Activated CD4-positive, alpha-beta T cell treated with anti-CD3 and anti-CD28 coated beads, Interleukin-2, amount 10 ng/mL, durations not matched to agents 24 days and 14 days (primary cell): ENCODE measurements at regions of chr3 and their contacts with region 1.

Region 1: GRCh38 chr3:150870396-150870795 is 34.8 kb downstream of the MINDY4B start:
- DNase-seq: no peak
- H3K4me3 Mint-ChIP-seq: no peak overlapping the region
- H3K27ac Mint-ChIP-seq: no peak overlapping the region
- H3K4me1 Mint-ChIP-seq: peaks cover under 1% of the 10 kb centered on the region
- H3K27me3 Mint-ChIP-seq: peaks cover 12% of the 10 kb centered on the region

Region 2: GRCh38 chr3:149688112-149688757 is 1182.2 kb before region 1 on chr3:
- intact Hi-C with region 1: no loop called
- DNase-seq: no peak
- H3K4me3 Mint-ChIP-seq: no peak overlapping the region
- H3K27ac Mint-ChIP-seq: no peak overlapping the region
- H3K4me1 Mint-ChIP-seq: no peaks in the 10 kb centered on the region
- H3K27me3 Mint-ChIP-seq: peaks cover 10% of the 10 kb centered on the region

Region 3: DNA sequence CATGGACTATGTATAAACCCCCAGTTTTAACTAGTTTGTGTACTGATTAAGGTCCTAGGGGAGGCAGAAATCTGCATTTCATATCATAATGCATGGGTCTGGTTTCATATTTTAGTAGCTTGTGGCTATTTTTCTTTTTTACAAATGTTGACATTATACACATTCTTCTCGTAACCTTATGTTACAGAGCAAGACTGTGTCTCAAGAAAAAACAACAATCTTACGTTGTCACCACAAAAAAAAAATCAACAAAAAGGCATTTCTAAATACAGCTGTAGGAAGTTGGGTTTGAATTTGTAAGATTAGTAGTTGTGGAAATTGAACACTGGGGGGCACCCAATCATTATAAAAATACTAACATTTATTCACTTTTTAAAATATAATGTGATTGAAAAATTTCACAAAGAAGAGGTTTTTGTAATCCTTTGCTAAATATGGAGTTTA is 342.0 kb before region 1 on chr3:
- intact Hi-C with region 1: loop called (anchors 2 kb)
- DNase-seq: no peak
- H3K4me3 Mint-ChIP-seq: no peak overlapping the region
- H3K27ac Mint-ChIP-seq: no peak overlapping the region
- H3K4me1 Mint-ChIP-seq: peaks cover 6% of the 10 kb centered on the region
- H3K27me3 Mint-ChIP-seq: peaks cover 14% of the 10 kb centered on the region

Region 4: DNA sequence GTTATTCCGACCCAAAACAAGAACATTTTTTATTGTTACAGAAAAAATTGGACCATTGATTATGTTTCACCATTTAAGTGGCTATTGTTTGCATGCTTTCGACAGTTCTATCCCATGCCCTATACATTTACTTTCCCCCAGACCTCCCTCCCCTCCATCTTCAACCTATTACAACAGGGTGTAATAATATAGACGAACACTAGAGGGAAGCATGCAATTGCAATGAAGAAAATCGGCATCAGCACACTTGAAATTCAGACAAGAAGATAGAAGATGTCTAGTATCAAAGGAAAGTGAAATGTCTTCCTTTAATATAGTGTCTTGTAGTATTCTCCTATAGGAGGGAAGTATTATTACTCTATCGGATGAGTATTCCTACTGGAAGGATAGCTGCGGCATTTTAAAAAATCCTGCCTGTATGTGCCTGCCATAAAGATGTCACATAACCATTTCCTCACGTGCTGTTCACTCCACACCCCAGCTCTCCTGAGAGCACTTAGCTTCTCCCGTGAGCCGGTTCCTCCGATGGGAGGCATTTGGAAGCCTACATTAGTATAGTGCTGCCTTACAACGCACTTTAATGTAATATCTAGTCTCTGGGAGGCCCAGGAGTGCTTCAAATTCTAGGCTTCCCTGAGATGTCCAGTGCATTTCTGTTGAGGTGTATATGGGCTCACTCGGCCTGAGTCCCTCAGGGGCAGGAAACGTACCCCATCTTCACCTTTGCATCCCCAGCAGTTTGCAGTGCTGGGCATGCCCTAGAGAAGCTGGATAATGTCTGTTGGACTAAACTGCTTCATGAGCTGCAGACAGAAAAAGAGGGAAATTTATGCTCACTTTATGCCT is 148.9 kb before region 1 on chr3:
- intact Hi-C with region 1: loop called (anchors 1 kb)
- DNase-seq: peak; percentile 79
- H3K4me3 Mint-ChIP-seq: no peak overlapping the region
- H3K27ac Mint-ChIP-seq: no peak overlapping the region
- H3K4me1 Mint-ChIP-seq: peaks cover 20% of the 10 kb centered on the region
- H3K27me3 Mint-ChIP-seq: no peaks in the 10 kb centered on the region

Region 5: DNA sequence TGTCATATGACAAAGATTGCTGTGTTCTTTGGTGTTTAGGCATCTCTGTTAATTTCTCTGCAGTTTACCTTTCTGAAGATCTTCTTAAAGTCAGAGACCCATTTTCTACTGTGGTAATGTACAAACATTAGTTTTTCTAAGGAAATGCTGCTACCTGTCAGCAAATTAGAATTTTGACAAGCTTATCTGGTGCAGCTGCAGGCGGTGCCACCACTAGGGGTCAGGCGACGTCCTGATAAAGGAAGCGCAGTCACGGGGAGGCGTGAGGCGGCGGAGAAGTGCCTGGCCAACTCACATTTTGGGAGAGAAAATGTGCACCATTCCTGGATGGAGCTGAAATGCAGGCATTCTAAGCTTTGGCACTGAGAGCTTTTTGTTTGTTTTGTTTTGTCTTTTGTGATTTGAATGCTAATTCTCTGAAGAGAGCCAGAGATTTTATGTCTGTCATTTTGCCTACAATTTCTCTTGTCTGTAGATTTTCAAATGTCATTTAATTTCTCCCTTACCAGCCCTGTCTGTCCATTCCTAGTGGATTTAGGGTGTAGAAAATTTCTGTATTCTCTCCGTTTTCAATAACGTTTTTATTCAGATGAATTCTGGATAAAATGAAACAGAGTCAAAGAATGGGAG is 82.5 kb before region 1 on chr3:
- intact Hi-C with region 1: loop called (anchors 1 kb)
- DNase-seq: peak; percentile 92
- H3K4me3 Mint-ChIP-seq: peak overlapping the region; percentile 2
- H3K27ac Mint-ChIP-seq: peak overlapping the region; percentile 39
- H3K4me1 Mint-ChIP-seq: peaks cover 39% of the 10 kb centered on the region
- H3K27me3 Mint-ChIP-seq: peaks cover 4% of the 10 kb centered on the region

Region 6: DNA sequence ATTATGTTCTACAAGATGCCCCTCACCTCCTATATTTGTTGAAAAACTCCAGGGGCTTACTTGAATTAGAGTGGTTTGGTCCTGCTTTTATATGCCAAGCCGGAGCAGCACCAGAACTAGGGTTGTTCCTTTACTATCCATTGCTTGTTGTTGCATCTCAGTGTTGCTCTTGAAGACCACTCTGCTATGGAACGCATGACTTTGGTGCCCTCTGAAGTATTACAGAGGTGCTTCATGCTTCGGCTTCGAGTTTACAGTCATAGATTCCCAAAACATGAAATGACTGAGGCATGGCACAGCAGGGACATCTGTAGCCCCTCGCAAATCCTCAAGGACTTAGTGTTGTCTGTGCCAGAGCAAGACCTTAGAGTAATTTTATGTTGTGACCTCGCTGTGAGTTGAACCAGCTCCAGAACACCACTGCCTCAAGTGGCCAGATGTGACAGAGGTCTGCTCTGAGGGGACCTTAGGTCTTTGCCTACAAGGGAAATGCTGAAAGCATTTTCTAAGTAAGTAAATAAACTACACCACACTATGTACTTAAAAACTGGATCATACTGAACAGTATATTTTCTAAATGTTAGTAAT is 40.2 kb before region 1 on chr3:
- intact Hi-C with region 1: loop called (anchors 2 kb)
- DNase-seq: peak; percentile 57
- H3K4me3 Mint-ChIP-seq: no peak overlapping the region
- H3K27ac Mint-ChIP-seq: no peak overlapping the region
- H3K4me1 Mint-ChIP-seq: no peaks in the 10 kb centered on the region
- H3K27me3 Mint-ChIP-seq: peaks cover 18% of the 10 kb centered on the region

Region 7: GRCh38 chr3:151903501-151903991 is 1033.2 kb after region 1 on chr3:
- intact Hi-C with region 1: no loop called
- DNase-seq: no peak
- H3K4me3 Mint-ChIP-seq: no peak overlapping the region
- H3K27ac Mint-ChIP-seq: no peak overlapping the region
- H3K4me1 Mint-ChIP-seq: peaks cover 7% of the 10 kb centered on the region
- H3K27me3 Mint-ChIP-seq: peaks cover 15% of the 10 kb centered on the region